OCI-LY7 (cell line): ENCODE measurements at regions of chr19 and their contacts with region 1.

Region 1: DNA sequence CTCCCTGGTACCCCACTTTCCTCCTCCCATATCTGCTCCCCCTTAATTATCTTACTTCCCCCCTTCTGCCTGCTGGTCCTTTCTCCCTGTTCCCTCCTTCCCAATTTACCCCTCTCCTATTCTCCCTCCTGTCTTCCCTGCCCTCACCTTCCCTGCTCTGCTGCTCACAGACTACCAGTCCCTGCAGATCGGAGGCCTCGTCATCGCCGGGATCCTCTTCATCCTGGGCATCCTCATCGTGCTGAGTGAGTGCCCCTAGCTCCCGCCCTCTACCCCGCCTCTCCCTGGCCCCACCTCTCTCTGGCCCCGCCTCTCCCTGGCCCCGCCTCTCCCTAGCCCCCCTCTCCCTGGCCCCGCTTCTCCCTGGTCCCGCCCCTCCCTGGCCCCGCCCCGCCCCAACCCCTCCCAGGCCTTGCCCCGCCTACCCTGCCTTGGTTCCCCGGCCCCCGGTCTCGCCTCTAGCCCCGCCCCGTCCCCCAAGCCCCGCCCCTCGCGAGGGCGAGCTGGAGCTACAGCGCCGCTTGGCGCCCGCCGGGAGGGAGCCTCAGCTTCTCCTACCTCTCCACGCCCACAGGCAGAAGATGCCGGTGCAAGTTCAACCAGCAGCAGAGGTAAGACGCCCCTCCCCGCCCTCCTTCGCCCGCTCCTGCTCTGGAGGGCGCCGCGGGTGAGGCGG is 2.0 kb upstream of the FXYD7 start:
- DNase-seq: peak; percentile 96
- H3K4me3 ChIP-seq: peak overlapping the region; percentile 67
- H3K27ac ChIP-seq: peak overlapping the region; percentile 44
- H3K4me1 ChIP-seq: peaks cover 43% of the 10 kb centered on the region
- CTCF ChIP-seq: peak; percentile 70

Region 2: DNA sequence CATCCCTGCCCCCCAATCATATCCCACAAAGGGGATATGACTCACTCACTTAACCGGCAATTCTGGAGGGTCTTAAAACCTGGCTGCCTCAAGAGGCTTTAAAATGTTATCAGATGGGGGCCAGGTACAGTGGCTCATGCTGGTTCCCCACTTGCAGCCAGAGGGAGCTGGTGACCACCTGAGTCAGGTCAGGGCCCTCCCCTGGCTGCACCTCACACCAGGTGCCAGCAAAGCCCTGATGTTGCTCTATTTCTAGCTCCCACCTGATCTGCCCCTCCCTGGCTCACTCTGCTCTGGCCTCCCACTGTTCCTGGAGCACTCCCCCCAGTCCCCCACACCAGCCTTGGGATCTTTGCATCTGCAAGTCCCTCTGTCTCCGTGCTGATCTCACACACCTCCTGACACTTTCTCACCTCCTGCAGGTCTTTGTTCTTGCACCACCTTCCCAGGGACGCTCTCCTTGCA is 85.4 kb before region 1 on chr19:
- CTCF ChIA-PET with region 1: interaction called, 4 read pairs
- POLR2A ChIA-PET with region 1: interaction called, 4 read pairs
- intact Hi-C with region 1: loop called (anchors 1 kb)
- DNase-seq: peak; percentile 76
- H3K4me3 ChIP-seq: no peak overlapping the region
- H3K27ac ChIP-seq: no peak overlapping the region
- H3K4me1 ChIP-seq: peaks cover 14% of the 10 kb centered on the region
- CTCF ChIP-seq: peak; percentile 81

Region 3: GRCh38 chr19:35154525-35155406 is 13.7 kb after region 1 on chr19 and contains the start of gene FXYD5:
- CTCF ChIA-PET with region 1: interaction called, 14 read pairs
- POLR2A ChIA-PET with region 1: interaction called, 5 read pairs
- intact Hi-C with region 1: no loop called
- DNase-seq: peak; percentile 69
- H3K4me3 ChIP-seq: peak within 1 kb of the TSS; percentile 81
- H3K27ac ChIP-seq: peak within 1 kb of the TSS; percentile 51
- H3K4me1 ChIP-seq: peaks cover 24% of the 10 kb centered on the region
- CTCF ChIP-seq: no peak
- total RNA-seq, gene FXYD5: 76.8 and 82.1 TPM in 2 replicates

Region 4: DNA sequence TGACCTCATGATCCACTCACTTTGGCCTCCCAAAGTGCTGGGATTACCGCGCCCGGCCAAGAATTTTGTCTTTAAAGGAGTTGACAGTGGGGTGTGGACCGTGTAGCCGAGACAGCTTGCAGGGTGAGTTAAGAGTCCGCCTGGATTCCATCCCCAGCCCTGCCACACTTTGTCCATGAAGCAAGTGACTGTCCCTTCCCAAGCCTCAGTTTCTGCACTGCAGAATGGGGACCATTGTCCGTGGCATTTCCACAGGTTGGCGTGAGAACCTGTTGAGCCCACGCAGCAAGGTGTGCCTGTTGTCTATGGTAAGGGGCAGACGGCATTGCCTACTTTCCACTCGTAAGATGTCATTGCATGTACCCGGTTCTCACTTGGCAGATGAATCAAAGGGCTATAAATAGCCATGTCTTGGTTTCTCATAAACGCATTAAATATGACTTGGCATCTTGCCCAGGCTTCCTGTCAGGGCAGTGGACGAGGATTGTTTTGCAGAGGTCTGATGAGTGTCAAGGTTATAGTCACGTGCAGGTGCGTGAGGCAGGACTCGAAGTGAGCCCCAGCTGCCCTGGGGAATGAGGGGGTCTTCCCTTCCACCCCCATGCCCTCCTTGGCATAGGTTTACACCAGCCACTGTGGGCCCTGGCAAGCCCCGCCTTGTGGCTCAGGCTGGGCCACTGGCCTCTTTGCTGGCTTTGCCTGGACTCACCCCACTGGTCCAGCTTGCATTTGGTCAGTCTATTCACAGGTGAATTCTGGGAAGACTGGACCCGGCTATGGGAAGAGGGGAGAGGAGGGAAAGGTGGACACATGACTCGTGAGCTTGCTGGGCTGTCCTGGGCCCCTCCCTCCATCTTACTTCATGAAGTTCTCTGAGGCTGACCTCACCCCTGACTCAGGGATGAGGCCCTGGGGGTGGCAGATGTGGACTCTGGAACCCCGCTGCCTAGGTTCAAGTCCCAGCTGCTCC is 72.8 kb after region 1 on chr19:
- CTCF ChIA-PET with region 1: interaction called, 8 read pairs
- POLR2A ChIA-PET with region 1: interaction called, 25 read pairs
- intact Hi-C with region 1: loop called (anchors 1 kb)
- DNase-seq: peak; percentile 93
- H3K4me3 ChIP-seq: peak overlapping the region; percentile 38
- H3K27ac ChIP-seq: peak overlapping the region; percentile 83
- H3K4me1 ChIP-seq: peaks cover 77% of the 10 kb centered on the region
- CTCF ChIP-seq: no peak

Region 5: GRCh38 chr19:35269421-35270117 is 128.5 kb after region 1 on chr19:
- CTCF ChIA-PET with region 1: interaction called, 6 read pairs
- POLR2A ChIA-PET with region 1: no interaction called
- intact Hi-C with region 1: loop called (anchors 5 kb)
- DNase-seq: peak; percentile 90
- H3K4me3 ChIP-seq: peak overlapping the region; percentile 75
- H3K27ac ChIP-seq: peak overlapping the region; percentile 61
- H3K4me1 ChIP-seq: peaks cover 43% of the 10 kb centered on the region
- CTCF ChIP-seq: peak; percentile 73

Region 6: DNA sequence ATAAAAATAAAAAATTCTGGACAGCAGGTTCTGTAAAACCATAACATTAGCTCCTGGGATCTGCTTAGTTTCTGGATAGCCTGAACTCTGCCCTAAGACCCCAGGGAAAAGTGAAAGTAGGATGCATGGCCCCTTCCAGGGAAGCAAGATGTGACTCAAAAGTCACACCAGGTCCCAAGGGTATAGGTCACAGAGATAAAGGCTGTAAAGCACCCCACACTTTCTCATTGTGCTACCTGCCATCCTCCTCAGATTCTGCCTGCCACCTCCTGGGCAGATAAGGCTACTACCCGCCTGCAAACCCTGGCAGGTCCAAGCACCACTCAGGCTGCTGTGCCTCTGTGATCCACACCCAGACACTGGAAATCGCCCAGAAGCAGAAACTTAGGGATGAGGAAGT is 327.5 kb after region 1 on chr19:
- CTCF ChIA-PET with region 1: no interaction called
- POLR2A ChIA-PET with region 1: interaction called, 4 read pairs
- intact Hi-C with region 1: loop called (anchors 10 kb)
- DNase-seq: peak; percentile 76
- H3K4me3 ChIP-seq: no peak overlapping the region
- H3K27ac ChIP-seq: no peak overlapping the region
- H3K4me1 ChIP-seq: peaks cover 2% of the 10 kb centered on the region
- CTCF ChIP-seq: peak; percentile 81